B cell (primary cell): ENCODE measurements at regions of chr17 and their contacts with region 1.

Region 1: DNA sequence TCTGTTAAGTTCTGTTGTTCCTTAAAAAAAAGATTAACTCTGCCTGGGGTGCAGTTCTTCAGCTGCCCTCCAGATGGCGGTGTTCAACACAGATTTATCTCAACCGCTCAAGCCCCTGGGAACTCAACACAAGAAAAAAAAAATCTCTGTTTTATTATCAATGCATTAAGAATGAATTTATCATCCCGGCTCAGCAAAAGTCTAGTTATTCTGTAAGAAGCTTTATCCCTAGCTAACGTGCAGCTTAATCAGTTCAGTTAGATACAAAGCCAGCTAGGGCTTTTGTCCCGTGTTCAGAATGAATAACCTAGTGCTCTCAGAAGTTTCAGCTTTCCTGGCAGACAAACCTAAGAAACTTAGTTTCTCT is 475.9 kb upstream of the CCL2 start:
- DNase-seq: peak; percentile 47
- ATAC-seq: peak; percentile 45
- H3K4me3 ChIP-seq: no peak overlapping the region
- H3K4me3 Mint-ChIP-seq: no peak overlapping the region
- H3K27ac ChIP-seq: no peak overlapping the region
- H3K27ac Mint-ChIP-seq: no peak overlapping the region
- H3K4me1 ChIP-seq: no peaks in the 10 kb centered on the region
- H3K4me1 Mint-ChIP-seq: no peaks in the 10 kb centered on the region
- H3K27me3 ChIP-seq: peaks cover 0 to 5% (median 0%) of the 10 kb centered on the region in 4 experiments
- H3K27me3 Mint-ChIP-seq: peaks cover 13% of the 10 kb centered on the region
- CTCF ChIP-seq: peak; percentile 97

Region 2: GRCh38 chr17:33500151-33500550 is 279.1 kb before region 1 on chr17:
- CTCF ChIA-PET with region 1: no interaction called
- POLR2A ChIA-PET with region 1: no interaction called
- intact Hi-C with region 1: no loop called
- DNase-seq: no peak
- ATAC-seq: no peak
- H3K4me3 ChIP-seq: no peak overlapping the region
- H3K4me3 Mint-ChIP-seq: no peak overlapping the region
- H3K27ac ChIP-seq: no peak overlapping the region
- H3K27ac Mint-ChIP-seq: no peak overlapping the region
- H3K4me1 ChIP-seq: no peaks in the 10 kb centered on the region
- H3K4me1 Mint-ChIP-seq: no peaks in the 10 kb centered on the region
- H3K27me3 ChIP-seq: no peaks in the 10 kb centered on the region
- H3K27me3 Mint-ChIP-seq: peaks cover 11% of the 10 kb centered on the region
- CTCF ChIP-seq: no peak

Region 3: GRCh38 chr17:33769066-33769465 is 10.1 kb before region 1 on chr17:
- CTCF ChIA-PET with region 1: interaction called, 15 read pairs
- POLR2A ChIA-PET with region 1: no interaction called
- intact Hi-C with region 1: no loop called
- DNase-seq: no peak
- ATAC-seq: no peak
- H3K4me3 ChIP-seq: no peak overlapping the region
- H3K4me3 Mint-ChIP-seq: no peak overlapping the region
- H3K27ac ChIP-seq: no peak overlapping the region
- H3K27ac Mint-ChIP-seq: no peak overlapping the region
- H3K4me1 ChIP-seq: no peaks in the 10 kb centered on the region
- H3K4me1 Mint-ChIP-seq: no peaks in the 10 kb centered on the region
- H3K27me3 ChIP-seq: no peaks in the 10 kb centered on the region
- H3K27me3 Mint-ChIP-seq: peaks cover 15% of the 10 kb centered on the region
- CTCF ChIP-seq: no peak

Region 4: DNA sequence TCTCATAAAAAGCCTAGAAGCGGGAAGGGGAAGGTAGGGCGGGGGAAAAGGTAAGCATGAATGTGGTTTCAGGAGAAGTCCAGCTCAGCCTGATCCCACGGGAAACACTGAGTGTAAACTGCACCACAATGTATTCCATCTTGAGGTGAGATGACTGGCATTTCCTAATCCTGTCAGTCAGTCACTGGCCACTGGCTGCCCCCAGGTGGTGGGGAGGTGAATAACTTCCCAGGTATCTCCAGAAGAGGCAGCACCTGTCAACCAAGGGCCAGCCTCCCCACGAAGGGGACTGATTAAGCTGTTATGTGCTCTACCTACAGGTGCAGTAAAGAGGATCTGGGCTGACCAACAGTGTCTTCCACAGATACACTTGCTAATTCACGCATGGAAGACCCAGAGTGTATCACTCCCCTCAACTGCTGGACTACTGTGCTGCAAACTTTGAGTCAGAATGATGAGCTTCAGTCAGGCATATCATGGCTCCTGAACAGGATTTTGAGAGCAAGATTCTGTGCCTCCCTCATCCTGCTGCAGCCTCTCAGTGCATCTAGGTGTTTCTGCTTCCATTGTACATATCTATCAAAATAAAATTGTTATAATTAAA is 367.3 kb after region 1 on chr17:
- CTCF ChIA-PET with region 1: interaction called, 11 read pairs
- POLR2A ChIA-PET with region 1: no interaction called
- intact Hi-C with region 1: no loop called
- DNase-seq: peak; percentile 52
- ATAC-seq: peak; percentile 36
- H3K4me3 ChIP-seq: no peak overlapping the region
- H3K4me3 Mint-ChIP-seq: no peak overlapping the region
- H3K27ac ChIP-seq: no peak overlapping the region
- H3K27ac Mint-ChIP-seq: no peak overlapping the region
- H3K4me1 ChIP-seq: no peaks in the 10 kb centered on the region
- H3K4me1 Mint-ChIP-seq: no peaks in the 10 kb centered on the region
- H3K27me3 ChIP-seq: peaks cover 0 to 3% (median 0%) of the 10 kb centered on the region in 4 experiments
- H3K27me3 Mint-ChIP-seq: peaks cover 29% of the 10 kb centered on the region
- CTCF ChIP-seq: peak; percentile 70